ENCODE measurements at regions of chr22 and their contacts with region 1.

Region 1: GRCh38 chr22:39543095-39543494 is 10.5 kb upstream of the RPS19BP1 start:
- DNase-seq: no peak
- H3K4me3 ChIP-seq: no peak overlapping the region
- H3K27ac ChIP-seq: no peak overlapping the region
- H3K4me1 ChIP-seq: no peaks in the 10 kb centered on the region
- H3K27me3 ChIP-seq: no peaks in the 10 kb centered on the region
- CTCF ChIP-seq: no peak
- POLR2A ChIP-seq: no peak

Region 2: GRCh38 chr22:40024201-40025061 is 481.3 kb after region 1 on chr22:
- intact Hi-C with region 1: loop called (anchors 5 kb)
- DNase-seq: no peak
- H3K4me3 ChIP-seq: no peak overlapping the region
- H3K27ac ChIP-seq: no peak overlapping the region
- H3K4me1 ChIP-seq: peaks cover 32% of the 10 kb centered on the region
- H3K27me3 ChIP-seq: no peaks in the 10 kb centered on the region
- CTCF ChIP-seq: peak; percentile 46 to 65 (median 59)
- POLR2A ChIP-seq: no peak

Measured in vagina (tissue), 2 donors.